Ascending aorta (tissue), 2 donors: ENCODE measurements at regions of chr6 and their contacts with region 1.

Region 1: DNA sequence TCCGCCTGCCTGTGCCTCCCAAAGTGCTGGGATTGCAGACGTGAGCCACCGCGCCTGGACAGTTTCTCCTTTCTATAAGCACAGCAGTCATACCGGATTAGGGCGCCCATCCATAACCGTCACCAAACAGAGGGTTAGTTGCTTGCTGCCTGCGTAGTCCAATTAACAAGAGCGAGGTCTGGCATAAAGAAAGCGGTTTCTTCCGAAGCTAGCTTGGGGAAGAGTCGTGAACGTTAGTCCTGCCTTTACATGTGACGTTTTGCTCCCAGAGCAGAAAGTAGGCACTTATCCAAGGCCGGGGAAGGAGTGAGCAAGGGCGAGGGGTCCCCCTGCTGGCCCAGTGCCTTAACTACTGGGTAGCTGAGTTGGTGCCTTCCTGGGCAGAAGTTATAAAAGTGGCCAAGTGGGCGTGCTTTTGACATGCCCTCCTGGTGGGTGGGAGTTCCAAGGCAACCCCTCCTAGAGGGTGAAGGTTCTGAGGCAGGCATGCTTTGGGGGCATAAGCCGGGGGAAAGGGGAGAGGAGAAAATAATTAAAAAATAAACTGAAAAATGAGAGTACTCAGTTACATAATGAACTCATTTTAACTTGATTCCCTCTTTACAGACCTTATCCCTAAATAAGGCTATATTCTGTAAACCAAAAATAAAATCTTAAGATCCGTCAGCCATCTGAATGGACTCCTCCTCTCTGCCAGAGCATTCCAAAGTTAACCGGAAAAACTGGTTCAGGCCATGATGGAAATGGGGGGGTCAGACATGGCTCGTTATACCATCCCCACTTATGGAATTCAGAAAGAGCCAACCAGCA is 88.0 kb downstream of the FAM217A start:
- DNase-seq: peak; percentile 65 to 95
- H3K4me3 ChIP-seq: peak overlapping the region; percentile 54 to 69
- H3K27ac ChIP-seq: peak overlapping the region; percentile 77 to 78
- H3K4me1 ChIP-seq: peaks cover 0 to 11% of the 10 kb centered on the region in 2 donors
- H3K27me3 ChIP-seq: no peaks in the 10 kb centered on the region
- CTCF ChIP-seq: peak; percentile 82 to 89 (median 88)

Region 2: DNA sequence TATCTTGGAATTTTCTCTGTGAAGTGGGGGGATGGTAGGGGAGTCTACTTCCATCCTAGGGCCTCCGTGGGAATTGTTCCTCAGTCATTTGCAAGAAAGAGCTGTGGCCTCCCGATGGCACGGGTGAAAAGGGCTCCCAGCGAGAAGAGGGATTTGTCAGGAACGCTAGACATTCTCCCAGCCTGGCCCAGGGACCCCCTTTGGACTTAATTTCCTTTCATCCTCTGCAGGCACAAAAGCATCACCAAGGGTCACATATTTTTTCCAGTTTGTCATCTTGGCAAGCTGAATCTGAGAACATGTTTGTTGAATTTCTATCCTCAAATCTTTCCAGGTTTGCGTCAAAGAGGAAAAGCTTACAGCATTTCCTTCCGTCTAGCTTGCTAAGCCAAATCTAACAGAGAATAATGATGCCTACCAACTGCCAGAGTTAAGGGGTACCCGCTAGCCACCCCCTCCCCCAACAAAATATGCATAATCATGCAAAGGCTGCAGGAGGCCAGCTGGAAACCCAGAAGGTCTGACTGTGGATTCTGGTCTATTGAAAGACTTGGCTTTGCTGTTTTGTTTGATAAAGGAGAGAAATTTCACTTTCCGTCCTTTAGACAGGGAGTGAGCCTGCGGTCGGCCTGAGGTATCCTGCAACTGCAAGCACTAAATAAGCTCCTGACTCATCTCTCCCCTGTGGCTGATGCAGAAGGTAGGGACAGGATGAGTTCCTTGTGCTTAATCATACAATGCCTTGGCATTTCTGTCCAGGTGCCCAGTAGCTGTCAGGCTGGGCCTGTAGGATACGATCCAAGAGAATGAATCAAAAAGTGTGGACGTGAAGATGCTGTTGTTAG is 709.0 kb before region 1 on chr6:
- intact Hi-C with region 1: loop called (anchors 5 kb)
- DNase-seq: peak in 1 of 2 donors; percentile 68
- H3K4me3 ChIP-seq: no peak overlapping the region
- H3K27ac ChIP-seq: peak overlapping the region; percentile 43 to 55
- H3K4me1 ChIP-seq: peaks cover 10 to 15% of the 10 kb centered on the region in 2 donors
- H3K27me3 ChIP-seq: no peaks in the 10 kb centered on the region
- CTCF ChIP-seq: no peak

Region 3: GRCh38 chr6:3456755-3457466 is 534.0 kb before region 1 on chr6 and contains the start of gene SLC22A23:
- intact Hi-C with region 1: loop called (anchors 10 kb)
- DNase-seq: peak in 1 of 2 donors; percentile 72
- H3K4me3 ChIP-seq: peak within 1 kb of the TSS; percentile 74 to 79
- H3K27ac ChIP-seq: peak within 1 kb of the TSS in 1 of 2 donors; percentile 37
- H3K4me1 ChIP-seq: peaks cover 5 to 8% of the 10 kb centered on the region in 2 donors
- H3K27me3 ChIP-seq: no peaks in the 10 kb centered on the region
- CTCF ChIP-seq: peak; percentile 36 to 92 (median 59)
- total RNA-seq, gene SLC22A23: 42.0 TPM

Region 4: GRCh38 chr6:3848925-3849605 is 141.8 kb before region 1 on chr6 and contains the start of gene FAM50B:
- intact Hi-C with region 1: loop called (anchors 5 kb)
- DNase-seq: peak; percentile 79 to 96
- H3K4me3 ChIP-seq: peak within 1 kb of the TSS; percentile 46 to 64
- H3K27ac ChIP-seq: peak within 1 kb of the TSS; percentile 70 to 74
- H3K4me1 ChIP-seq: peaks cover 0 to 36% of the 10 kb centered on the region in 2 donors
- H3K27me3 ChIP-seq: no peaks in the 10 kb centered on the region
- CTCF ChIP-seq: peak; percentile 91 to 99 (median 98)
- total RNA-seq, gene FAM50B: 8.1 TPM